ENCODE measurements at regions of chr9 and their contacts with region 1.

Region 1: GRCh38 chr9:35071814-35072460 is 488 bp downstream of the VCP start:
- DNase-seq: peak; percentile 81 to 83
- ATAC-seq: peak; percentile 64 to 70
- H3K4me3 ChIP-seq: peak overlapping the region; percentile 91 to 100 (median 94)
- H3K27ac ChIP-seq: peak overlapping the region; percentile 92 to 100 (median 98)
- H3K4me1 ChIP-seq: peaks cover 29 to 38% of the 10 kb centered on the region in 2 donors
- H3K27me3 ChIP-seq: no peaks in the 10 kb centered on the region
- CTCF ChIP-seq: peak; percentile 15 to 55 (median 39)
- POLR2A ChIP-seq: peak; percentile 85 to 93

Region 2: GRCh38 chr9:34989003-34989945 is 82.7 kb before region 1 on chr9 and contains the start of gene DNAJB5:
- in situ Hi-C with region 1: no loop called
- intact Hi-C with region 1: loop called (anchors 1 kb)
- DNase-seq: peak; percentile 99 to 100
- ATAC-seq: peak; percentile 47 to 51
- H3K4me3 ChIP-seq: peak within 1 kb of the TSS; percentile 80 to 91 (median 89)
- H3K27ac ChIP-seq: peak within 1 kb of the TSS in 3 of 4 donors; percentile 85 to 93 (median 89)
- H3K4me1 ChIP-seq: peaks cover 27 to 28% of the 10 kb centered on the region in 2 donors
- H3K27me3 ChIP-seq: no peaks in the 10 kb centered on the region
- CTCF ChIP-seq: no peak
- POLR2A ChIP-seq: no peak
- total RNA-seq, gene DNAJB5: 75.3 to 187 (median 128) TPM

Region 3: GRCh38 chr9:35051069-35051967 is 20.6 kb before region 1 on chr9:
- in situ Hi-C with region 1: no loop called
- intact Hi-C with region 1: loop called (anchors 2 kb)
- DNase-seq: peak; percentile 52 to 66
- ATAC-seq: peak; percentile 98 to 99
- H3K4me3 ChIP-seq: no peak overlapping the region
- H3K27ac ChIP-seq: peak overlapping the region; percentile 74 to 91 (median 82)
- H3K4me1 ChIP-seq: peaks cover 6 to 10% of the 10 kb centered on the region in 2 donors
- H3K27me3 ChIP-seq: no peaks in the 10 kb centered on the region
- CTCF ChIP-seq: peak; percentile 76 to 85 (median 82)
- POLR2A ChIP-seq: no peak

Region 4: GRCh38 chr9:35102926-35103659 is 31.2 kb after region 1 on chr9 and contains the start of gene STOML2:
- in situ Hi-C with region 1: no loop called
- intact Hi-C with region 1: loop called (anchors 2 kb)
- DNase-seq: peak; percentile 95
- ATAC-seq: peak; percentile 99
- H3K4me3 ChIP-seq: peak within 1 kb of the TSS; percentile 74 to 92 (median 79)
- H3K27ac ChIP-seq: peak within 1 kb of the TSS; percentile 85 to 97 (median 94)
- H3K4me1 ChIP-seq: peaks cover 15 to 22% of the 10 kb centered on the region in 2 donors
- H3K27me3 ChIP-seq: no peaks in the 10 kb centered on the region
- CTCF ChIP-seq: no peak
- POLR2A ChIP-seq: peak; percentile 52 to 72
- total RNA-seq, gene STOML2: 117 to 168 (median 158) TPM

Region 5: GRCh38 chr9:35690431-35691333 is 618.7 kb after region 1 on chr9:
- in situ Hi-C with region 1: no loop called
- intact Hi-C with region 1: loop called (anchors 2 kb)
- DNase-seq: peak; percentile 56 to 75
- ATAC-seq: peak; percentile 21 to 32
- H3K4me3 ChIP-seq: peak overlapping the region; percentile 77 to 96 (median 87)
- H3K27ac ChIP-seq: peak overlapping the region; percentile 97 to 99 (median 98)
- H3K4me1 ChIP-seq: peaks cover 35 to 37% of the 10 kb centered on the region in 2 donors
- H3K27me3 ChIP-seq: no peaks in the 10 kb centered on the region
- CTCF ChIP-seq: no peak
- POLR2A ChIP-seq: peak; percentile 21 to 25

Measured in gastrocnemius medialis (tissue), 4 donors.